ENCODE measurements at regions of chr2 and their contacts with region 1.

Region 1: DNA sequence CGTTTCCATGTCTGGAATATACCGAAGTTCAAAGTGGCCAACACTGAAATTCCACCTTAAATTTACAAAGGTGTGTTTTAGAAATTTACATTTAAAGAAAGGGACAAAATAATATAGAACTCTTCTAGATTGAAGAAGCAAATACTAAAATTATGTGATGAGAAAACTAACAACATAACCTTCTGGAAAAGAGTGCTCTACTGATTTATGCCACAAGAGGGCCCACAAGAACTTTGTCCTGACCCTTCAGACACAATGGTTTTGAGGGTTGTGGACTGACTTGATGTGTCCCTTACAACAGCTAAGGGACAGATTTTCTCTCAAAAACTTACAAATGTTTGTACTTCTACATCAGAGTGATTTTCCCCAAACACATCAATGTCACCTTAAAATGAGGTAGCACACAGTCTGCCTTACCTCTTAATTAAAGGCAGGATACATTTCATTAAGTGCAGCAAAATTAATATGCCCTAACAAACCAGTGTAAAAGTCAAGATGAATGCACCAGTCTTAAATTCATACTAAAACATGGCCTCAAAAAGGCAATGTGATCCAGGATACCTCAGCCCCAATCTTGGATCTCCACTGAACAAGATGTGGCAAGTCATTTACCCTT is 36.2 kb downstream of the EIF2AK3 start:
- DNase-seq: peak; percentile 37
- H3K4me3 ChIP-seq: no peak overlapping the region
- H3K27ac ChIP-seq: no peak overlapping the region
- H3K27me3 ChIP-seq: no peaks in the 10 kb centered on the region
- CTCF ChIP-seq: peak; percentile 85

Region 2: DNA sequence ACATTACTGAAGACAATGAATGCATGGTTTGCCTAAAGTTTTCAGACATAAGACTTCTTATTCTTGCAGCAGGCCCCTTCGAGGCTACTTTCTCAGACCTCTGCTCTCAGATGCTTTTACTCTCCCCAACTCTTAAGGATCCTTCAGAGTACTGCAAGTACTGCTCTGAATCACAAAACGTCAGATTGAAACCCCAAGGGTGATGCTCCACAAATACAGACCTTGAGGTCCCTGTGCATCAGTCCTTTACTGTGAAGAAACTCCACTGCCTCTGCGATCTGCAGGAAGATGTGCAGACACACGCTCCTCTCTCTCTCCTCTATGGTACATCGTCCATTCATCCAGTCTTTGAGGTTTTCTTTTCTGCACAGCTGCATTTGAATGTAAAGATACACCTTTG is 16.7 kb before region 1 on chr2:
- CTCF ChIA-PET with region 1: interaction called, 12 read pairs
- POLR2A ChIA-PET with region 1: no interaction called
- DNase-seq: no peak
- H3K4me3 ChIP-seq: no peak overlapping the region
- H3K27ac ChIP-seq: no peak overlapping the region
- H3K27me3 ChIP-seq: no peaks in the 10 kb centered on the region
- CTCF ChIP-seq: no peak

Region 3: DNA sequence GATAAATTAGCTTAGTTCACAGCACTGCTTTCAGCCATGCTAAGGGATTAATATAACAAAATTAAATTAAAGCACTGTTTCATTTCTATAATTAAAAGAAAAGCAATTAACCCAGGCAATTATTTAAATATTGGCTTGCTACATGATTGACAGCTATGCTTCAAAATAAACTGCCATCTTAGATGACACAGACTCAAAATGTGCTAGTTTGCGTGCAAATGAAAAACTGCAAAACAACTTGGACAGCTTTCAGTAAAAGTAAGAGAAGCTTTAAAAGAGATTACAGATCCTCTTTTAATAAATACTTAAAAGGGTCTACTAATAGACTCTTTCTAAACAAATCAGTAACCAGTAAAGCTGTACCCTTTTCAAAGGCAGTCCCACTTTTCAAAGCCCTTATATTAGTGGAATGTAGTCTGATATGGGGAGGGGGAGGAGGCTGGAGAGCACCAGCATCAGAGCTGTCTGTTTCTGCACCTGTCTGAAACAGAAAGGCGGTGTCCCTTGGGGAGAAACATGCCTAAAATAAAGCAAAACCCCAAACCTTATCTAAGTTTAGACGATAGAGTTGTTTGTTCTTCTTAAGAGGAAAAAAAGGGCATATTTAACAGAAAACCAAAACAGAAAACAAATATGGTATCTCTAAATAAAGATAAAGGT is 15.4 kb after region 1 on chr2:
- CTCF ChIA-PET with region 1: interaction called, 13 read pairs
- POLR2A ChIA-PET with region 1: interaction called, 5 read pairs
- DNase-seq: no peak
- H3K4me3 ChIP-seq: no peak overlapping the region
- H3K27ac ChIP-seq: no peak overlapping the region
- H3K27me3 ChIP-seq: no peaks in the 10 kb centered on the region
- CTCF ChIP-seq: no peak

Measured in AG04450 (cell line).